GM12878 (cell line): ENCODE measurements at regions of chr18 and their contacts with region 1.

Region 1: DNA sequence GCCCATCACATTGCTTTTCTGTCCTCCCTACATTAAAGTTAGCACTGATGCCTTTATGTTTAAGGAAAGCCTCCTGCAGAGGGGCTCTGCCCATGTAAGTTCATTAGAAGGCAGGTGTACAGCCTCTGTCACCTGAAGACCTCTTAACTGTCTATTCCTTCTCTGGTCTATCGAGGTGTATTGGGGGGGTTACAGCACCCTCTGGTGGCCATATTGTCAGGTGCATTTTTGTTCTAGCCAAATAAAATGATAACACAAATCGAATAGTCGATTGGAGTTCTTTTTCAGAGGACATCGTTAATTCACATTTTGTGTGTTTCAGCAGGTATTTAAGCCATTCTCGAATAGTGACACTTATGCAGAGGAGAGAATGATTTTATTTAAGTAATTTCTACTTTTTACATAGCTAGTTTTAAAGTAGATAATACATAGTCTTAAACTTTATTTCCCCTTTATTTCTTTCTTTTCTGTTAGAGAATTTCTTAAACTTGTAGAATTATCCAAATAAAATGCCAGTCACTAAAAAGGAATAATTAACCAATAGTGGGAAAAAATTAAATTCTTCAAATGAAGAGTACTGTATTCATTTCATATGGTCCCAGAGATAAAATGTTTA is 136.8 kb downstream of the NEDD4L start:
- DNase-seq: no peak
- ATAC-seq: peak; percentile 86
- H3K4me3 ChIP-seq: no peak overlapping the region
- H3K27ac ChIP-seq: no peak overlapping the region
- H3K4me1 ChIP-seq: no peaks in the 10 kb centered on the region
- H3K27me3 ChIP-seq: no peaks in the 10 kb centered on the region
- CTCF ChIP-seq: peak; percentile 78 to 87 (median 78)
- EP300 ChIP-seq: no peak
- POLR2A ChIP-seq: no peak
- RAD21 ChIP-seq: peak; percentile 79

Region 2: GRCh38 chr18:57959278-57959677 is 221.6 kb before region 1 on chr18:
- CTCF ChIA-PET with region 1: interaction called, 23 read pairs
- POLR2A ChIA-PET with region 1: no interaction called
- RAD21 ChIA-PET with region 1: interaction called, 4 read pairs
- SMC1A ChIA-PET with region 1: interaction called, 10 read pairs
- in situ Hi-C with region 1: no loop called
- intact Hi-C with region 1: loop called (anchors 5 kb)
- DNase-seq: no peak
- ATAC-seq: peak; percentile 86
- H3K4me3 ChIP-seq: no peak overlapping the region
- H3K27ac ChIP-seq: no peak overlapping the region
- H3K4me1 ChIP-seq: no peaks in the 10 kb centered on the region
- H3K27me3 ChIP-seq: 0 out of 4 replicates have a peak, but pooled peaks cover 0 to 2% of the 10 kb centered on the region in 2 experiments
- CTCF ChIP-seq: peak; percentile 45 to 54 (median 49); a peak in 5 of 6 replicates
- EP300 ChIP-seq: no peak
- POLR2A ChIP-seq: no peak
- RAD21 ChIP-seq: 0 out of 2 replicates have a peak, but pooled peaks have one; percentile 27

Region 3: GRCh38 chr18:58195278-58195765 is 14.5 kb after region 1 on chr18:
- CTCF ChIA-PET with region 1: interaction called, 70 read pairs
- POLR2A ChIA-PET with region 1: no interaction called
- RAD21 ChIA-PET with region 1: interaction called, 11 read pairs
- SMC1A ChIA-PET with region 1: interaction called, 32 read pairs
- in situ Hi-C with region 1: no loop called
- intact Hi-C with region 1: no loop called
- DNase-seq: no peak
- ATAC-seq: peak; percentile 83
- H3K4me3 ChIP-seq: peak overlapping the region; percentile 64
- H3K27ac ChIP-seq: no peak overlapping the region
- H3K4me1 ChIP-seq: no peaks in the 10 kb centered on the region
- H3K27me3 ChIP-seq: no peaks in the 10 kb centered on the region
- CTCF ChIP-seq: no peak
- EP300 ChIP-seq: no peak
- POLR2A ChIP-seq: no peak
- RAD21 ChIP-seq: no peak

Region 4: DNA sequence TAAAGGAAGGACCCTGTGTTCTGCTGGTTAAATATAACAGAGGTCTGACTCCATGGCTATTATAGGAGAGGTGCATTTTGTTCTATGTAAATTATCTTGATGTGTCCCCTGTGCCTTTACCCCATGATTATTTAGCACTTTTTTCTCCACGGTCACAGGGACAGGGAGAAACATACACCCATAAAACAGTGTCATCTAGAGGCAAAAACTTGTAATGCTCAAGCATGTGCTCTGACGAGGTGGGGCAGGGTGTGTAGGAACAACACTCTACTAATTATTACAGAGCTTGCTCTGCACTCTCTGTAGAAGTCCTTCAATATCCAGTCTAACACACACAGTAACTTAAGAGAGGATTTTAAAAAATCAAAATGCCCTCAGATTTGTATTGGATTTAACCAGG is 51.1 kb after region 1 on chr18:
- CTCF ChIA-PET with region 1: interaction called, 11 read pairs
- POLR2A ChIA-PET with region 1: interaction called, 7 read pairs
- RAD21 ChIA-PET with region 1: interaction called, 6 read pairs
- SMC1A ChIA-PET with region 1: interaction called, 7 read pairs
- in situ Hi-C with region 1: no loop called
- intact Hi-C with region 1: no loop called
- DNase-seq: no peak
- ATAC-seq: peak; percentile 84
- H3K4me3 ChIP-seq: no peak overlapping the region
- H3K27ac ChIP-seq: no peak overlapping the region
- H3K4me1 ChIP-seq: peaks cover 4% of the 10 kb centered on the region
- H3K27me3 ChIP-seq: no peaks in the 10 kb centered on the region
- CTCF ChIP-seq: peak; percentile 26 to 54 (median 38); a peak in 4 of 6 replicates
- EP300 ChIP-seq: no peak
- POLR2A ChIP-seq: no peak
- RAD21 ChIP-seq: peak; percentile 68

Region 5: DNA sequence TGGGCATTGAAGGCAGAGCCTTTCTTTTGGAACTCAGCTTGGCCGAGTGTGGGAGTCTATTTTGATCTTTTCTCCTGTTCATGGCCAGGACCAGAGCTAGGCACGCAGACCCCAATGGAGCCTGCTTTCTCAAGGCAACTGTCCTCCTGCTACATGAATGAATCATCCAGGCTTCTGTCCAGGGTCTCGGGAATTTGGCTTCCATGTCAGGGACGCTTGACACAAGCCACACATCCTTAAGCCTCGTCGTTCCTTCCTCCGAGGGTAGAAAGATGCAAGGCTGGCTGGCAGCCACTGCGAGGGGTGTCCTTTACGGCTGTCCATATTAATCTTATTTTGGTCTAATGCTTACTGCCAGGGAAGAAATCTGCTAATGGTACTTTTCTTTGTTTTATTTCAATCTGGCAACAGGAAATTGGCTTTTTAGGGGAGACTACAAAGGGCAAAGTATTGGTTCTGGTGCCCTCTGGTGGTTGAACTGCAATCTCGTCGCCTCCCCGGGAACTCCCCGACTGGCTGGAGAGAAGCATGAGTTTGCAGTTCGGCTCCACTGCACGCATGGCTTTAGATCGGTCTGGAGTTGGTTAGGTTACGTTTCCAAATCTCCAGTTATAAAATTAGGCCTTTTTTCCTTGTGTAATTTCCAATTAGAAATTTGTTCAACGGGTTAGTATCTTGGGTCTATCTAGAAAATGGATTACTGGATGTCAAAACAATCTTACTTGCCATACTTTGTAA is 312.8 kb after region 1 on chr18:
- CTCF ChIA-PET with region 1: interaction called, 10 read pairs
- POLR2A ChIA-PET with region 1: no interaction called
- RAD21 ChIA-PET with region 1: no interaction called
- SMC1A ChIA-PET with region 1: no interaction called
- in situ Hi-C with region 1: no loop called
- intact Hi-C with region 1: no loop called
- DNase-seq: peak; percentile 28
- ATAC-seq: peak; percentile 94
- H3K4me3 ChIP-seq: no peak overlapping the region
- H3K27ac ChIP-seq: no peak overlapping the region
- H3K4me1 ChIP-seq: peaks cover 13% of the 10 kb centered on the region
- H3K27me3 ChIP-seq: no peaks in the 10 kb centered on the region
- CTCF ChIP-seq: peak; percentile 75 to 90 (median 85)
- EP300 ChIP-seq: no peak
- POLR2A ChIP-seq: no peak
- RAD21 ChIP-seq: peak; percentile 81